ENCODE measurements at regions of chr9 and their contacts with region 1.

Region 1: GRCh38 chr9:133737774-133738639 is at the start of gene SARDH:
- DNase-seq: peak; percentile 50
- H3K4me3 ChIP-seq: peak within 1 kb of the TSS in 1 of 2 donors; percentile 27
- H3K27ac ChIP-seq: no peak within 1 kb of the TSS
- H3K4me1 ChIP-seq: peaks cover 13% of the 10 kb centered on the region
- H3K27me3 ChIP-seq: no peaks in the 10 kb centered on the region
- CTCF ChIP-seq: no peak
- POLR2A ChIP-seq: no peak
- total RNA-seq, gene SARDH: 5.1 to 7.2 TPM

Region 2: GRCh38 chr9:133238851-133239532 is 499.0 kb before region 1 on chr9:
- intact Hi-C with region 1: no loop called
- DNase-seq: peak; percentile 82
- H3K4me3 ChIP-seq: peak overlapping the region; percentile 10 to 14
- H3K27ac ChIP-seq: peak overlapping the region; percentile 72 to 75
- H3K4me1 ChIP-seq: peaks cover 18% of the 10 kb centered on the region
- H3K27me3 ChIP-seq: no peaks in the 10 kb centered on the region
- CTCF ChIP-seq: peak; percentile 62 to 75 (median 68)
- POLR2A ChIP-seq: no peak

Region 3: DNA sequence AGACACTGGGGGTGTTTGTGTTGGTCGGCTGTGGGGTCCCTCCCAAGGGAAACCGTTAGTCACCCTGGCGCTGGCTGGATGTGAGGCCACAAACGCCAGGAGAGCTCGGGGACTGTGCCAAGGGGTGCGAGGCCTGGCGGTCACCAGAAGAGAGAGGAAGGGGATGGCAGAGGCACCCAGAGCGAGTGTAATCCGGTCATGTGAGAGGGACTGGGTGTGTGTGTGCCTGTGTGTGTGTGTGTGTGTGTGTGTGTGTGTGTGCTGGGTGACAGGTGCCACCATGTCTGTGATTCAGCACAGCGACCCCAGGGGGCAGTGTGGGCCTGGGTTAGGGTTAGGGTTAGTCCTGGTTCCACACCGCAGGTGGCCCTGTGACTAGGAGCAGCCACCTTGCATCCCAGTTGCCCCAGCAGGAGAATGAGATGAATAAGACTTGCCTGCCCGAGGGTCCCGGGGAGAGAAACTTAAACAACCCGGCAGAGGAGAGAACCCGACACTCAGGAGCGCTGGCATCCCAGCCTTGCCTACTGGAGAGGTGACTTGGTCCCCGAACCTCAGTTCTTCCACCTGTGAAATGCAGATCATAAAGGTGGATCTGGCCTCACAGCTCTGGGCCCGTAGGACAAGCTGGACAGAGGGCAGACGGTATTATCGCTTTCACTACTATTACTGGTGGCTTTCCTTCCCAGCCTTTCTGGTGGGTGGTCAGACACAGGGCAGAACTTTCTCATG is 204.9 kb before region 1 on chr9:
- intact Hi-C with region 1: loop called (anchors 10 kb)
- DNase-seq: peak; percentile 67
- H3K4me3 ChIP-seq: no peak overlapping the region
- H3K27ac ChIP-seq: no peak overlapping the region
- H3K4me1 ChIP-seq: peaks cover 42% of the 10 kb centered on the region
- H3K27me3 ChIP-seq: no peaks in the 10 kb centered on the region
- CTCF ChIP-seq: peak; percentile 9 to 58 (median 21)
- POLR2A ChIP-seq: no peak

Measured in testis (tissue), 5 donors.